ENCODE measurements at regions of chr1 and their contacts with region 1.

Region 1: DNA sequence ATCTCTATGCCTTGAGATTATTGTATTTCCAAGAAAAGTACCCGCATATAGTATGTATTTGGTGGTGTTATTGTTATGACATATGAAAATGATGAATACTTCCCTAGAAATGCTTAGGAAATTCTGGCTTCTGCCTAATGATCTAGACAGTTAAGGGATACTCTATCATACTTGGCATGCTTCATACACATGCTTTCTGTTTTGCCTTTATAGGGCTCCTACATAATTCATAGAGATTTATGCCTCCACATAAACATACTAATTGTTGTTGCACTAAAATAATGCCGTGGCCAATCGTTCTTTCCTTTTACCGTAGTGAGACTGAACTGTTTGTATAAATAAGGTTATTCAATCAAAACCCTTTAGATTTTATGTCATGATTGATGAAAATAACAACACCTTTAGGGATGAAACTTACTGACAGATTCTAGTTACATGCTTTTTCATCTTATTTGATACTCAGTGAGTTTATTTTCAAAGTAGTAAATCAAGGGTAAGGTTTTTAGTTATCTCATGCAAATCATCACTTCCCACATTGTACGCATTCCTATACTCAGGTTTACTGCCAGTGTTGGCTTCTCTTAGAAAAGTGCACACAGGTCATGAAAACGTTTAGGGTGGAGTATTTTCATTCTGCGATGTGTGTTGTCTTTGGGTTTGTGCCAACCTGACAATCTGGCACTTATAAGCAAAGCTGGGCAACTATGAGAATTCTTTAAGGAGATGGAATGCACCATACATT is 40.5 kb upstream of the SCYL3 start:
- DNase-seq: no peak
- ATAC-seq: no peak
- H3K4me3 Mint-ChIP-seq: no peak overlapping the region
- H3K27ac Mint-ChIP-seq: no peak overlapping the region
- H3K4me1 Mint-ChIP-seq: no peaks in the 10 kb centered on the region
- H3K27me3 Mint-ChIP-seq: no peaks in the 10 kb centered on the region

Region 2: DNA sequence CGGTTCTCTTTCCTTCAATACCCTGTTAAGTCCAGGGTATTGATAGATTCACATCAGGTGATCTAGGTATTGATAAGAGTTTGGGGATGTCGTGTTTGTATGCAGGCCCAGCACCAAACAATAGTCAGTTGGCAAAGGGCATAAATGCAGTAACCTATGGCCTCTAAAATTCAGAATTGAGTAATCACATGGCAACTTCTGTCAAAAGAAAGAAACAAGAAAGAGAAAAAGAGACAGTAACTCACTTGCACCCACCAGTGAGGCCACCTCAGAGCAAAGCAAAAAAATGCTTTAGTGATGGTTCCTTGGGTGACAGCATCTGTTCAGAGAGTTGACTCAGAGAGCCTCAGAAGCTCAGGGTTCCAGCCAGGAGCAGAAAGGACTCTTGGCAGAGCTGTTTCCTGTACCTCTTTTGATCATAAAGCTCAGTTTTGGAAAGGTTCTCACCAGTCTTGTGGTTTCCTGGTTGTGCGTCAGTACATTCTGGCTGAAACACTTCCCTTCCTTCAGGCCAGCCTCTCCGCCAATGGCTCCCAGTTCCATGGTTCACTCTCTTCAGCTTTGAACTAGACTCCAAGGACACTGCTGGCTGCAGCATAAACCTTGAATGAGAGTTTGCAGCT is 527.7 kb after region 1 on chr1:
- CTCF ChIA-PET with region 1: no interaction called
- POLR2A ChIA-PET with region 1: no interaction called
- intact Hi-C with region 1: loop called in 1 of 2 experiments (anchors 10 kb)
- DNase-seq: peak; percentile 5
- ATAC-seq: no peak
- H3K4me3 Mint-ChIP-seq: no peak overlapping the region
- H3K27ac Mint-ChIP-seq: no peak overlapping the region
- H3K4me1 Mint-ChIP-seq: no peaks in the 10 kb centered on the region
- H3K27me3 Mint-ChIP-seq: peaks cover 13% of the 10 kb centered on the region

Measured in activated CD4-positive, alpha-beta T cell treated with anti-CD3 and anti-CD28 coated beads for 36 hours (primary cell).